ENCODE measurements at regions of chr1 and their contacts with region 1.

Region 1: DNA sequence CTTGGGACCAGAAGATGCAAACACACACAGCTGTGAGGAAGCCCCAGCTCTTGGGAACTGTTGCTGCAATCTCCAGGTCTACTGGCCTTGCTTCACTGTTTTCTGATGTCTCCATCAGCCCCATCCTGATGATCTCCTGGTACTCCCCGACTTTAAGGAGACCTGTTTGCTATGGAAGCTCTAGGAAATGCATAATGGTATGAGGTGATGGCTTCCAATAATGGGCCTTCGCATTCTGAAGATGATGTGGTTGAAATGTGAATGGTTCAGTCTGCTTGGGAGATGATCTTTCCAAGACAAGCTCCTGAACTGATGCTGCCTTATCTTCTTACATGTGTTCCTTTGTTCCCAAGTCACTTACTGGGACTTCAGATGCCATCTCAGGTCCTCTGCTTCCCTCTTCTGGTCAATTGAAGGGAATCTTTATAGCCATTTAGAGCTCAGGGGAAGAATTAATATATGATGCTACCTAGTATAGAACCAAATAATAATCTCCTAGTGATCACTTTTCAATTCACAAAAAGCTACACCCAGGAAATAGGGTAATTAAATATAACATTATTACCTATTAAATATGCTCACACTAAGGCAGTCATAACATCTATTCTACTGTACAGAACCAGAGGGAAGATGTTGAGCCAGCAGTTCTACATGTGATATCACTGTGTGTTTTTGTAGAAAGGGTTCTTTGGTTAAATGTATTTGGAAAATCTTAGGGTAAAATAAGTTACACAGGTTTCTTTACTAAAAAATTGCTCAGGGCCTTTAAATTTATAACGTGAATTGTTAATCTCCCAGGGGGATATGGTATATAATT is 73.9 kb upstream of the VTCN1 start:
- DNase-seq: no peak
- H3K4me3 ChIP-seq: no peak overlapping the region
- H3K27ac ChIP-seq: no peak overlapping the region
- H3K4me1 ChIP-seq: peaks cover 0 to 3% (median 0%) of the 10 kb centered on the region in 4 donors
- H3K27me3 ChIP-seq: peaks cover 8% of the 10 kb centered on the region
- CTCF ChIP-seq: peak; percentile 41 to 63 (median 49)
- EP300 ChIP-seq: no peak
- POLR2A ChIP-seq: no peak

Region 2: DNA sequence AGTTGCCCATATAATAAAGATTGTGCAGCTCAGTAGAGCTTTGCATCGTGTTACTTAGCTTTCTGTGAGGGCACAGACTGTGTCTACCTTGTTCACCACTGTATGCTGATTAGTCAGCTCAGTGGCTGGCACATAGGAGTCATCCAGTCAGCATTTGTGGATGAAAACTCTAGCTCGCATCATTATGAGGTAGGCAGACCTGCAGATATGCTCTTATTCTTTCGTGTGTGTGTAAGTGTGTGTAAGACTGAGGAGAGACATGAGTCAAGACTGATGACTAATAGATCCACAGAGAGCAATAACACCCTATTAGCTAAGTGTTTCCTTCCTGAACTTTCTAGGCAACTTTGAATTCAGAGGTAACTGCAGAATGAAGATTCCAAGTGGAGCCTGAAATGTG is 207.3 kb before region 1 on chr1:
- in situ Hi-C with region 1: loop called in 1 of 4 experiments (anchors 10 kb)
- intact Hi-C with region 1: no loop called
- DNase-seq: no peak
- H3K4me3 ChIP-seq: no peak overlapping the region
- H3K27ac ChIP-seq: no peak overlapping the region
- H3K4me1 ChIP-seq: no peaks in the 10 kb centered on the region
- H3K27me3 ChIP-seq: no peaks in the 10 kb centered on the region
- CTCF ChIP-seq: no peak
- EP300 ChIP-seq: no peak
- POLR2A ChIP-seq: no peak

Region 3: DNA sequence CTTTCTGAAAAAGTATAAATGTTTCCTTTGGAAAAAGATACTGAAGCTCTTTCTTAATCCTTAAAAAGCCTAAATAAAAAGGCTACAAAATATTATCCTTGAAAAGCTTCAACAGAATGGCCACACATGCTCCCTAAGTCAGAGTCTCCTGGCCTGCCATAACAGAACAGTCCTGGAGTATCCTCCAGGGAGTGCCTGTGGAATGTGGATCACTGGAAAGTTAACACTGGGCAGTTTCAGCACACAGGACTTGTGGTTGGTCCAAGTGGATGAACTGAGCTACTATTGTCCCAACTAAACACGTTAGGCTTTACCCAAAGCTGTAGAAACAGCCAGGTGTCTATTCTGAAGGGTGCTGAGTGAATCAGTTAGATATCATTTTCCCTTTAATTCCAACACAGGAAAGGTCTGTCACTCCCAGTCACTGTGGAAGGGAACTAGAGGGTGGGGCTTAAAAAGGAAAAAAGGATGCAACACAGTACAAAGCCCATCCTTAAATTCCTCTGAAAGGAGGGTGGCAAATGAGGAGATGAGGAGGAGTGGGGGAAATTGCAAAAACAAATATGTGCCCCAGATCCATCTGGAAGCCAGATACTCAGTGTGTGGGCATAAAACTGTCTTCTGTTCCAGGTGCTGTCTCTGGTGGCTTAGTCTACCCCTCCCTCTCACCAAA is 1096.7 kb after region 1 on chr1:
- in situ Hi-C with region 1: no loop called
- intact Hi-C with region 1: no loop called
- DNase-seq: no peak
- H3K4me3 ChIP-seq: no peak overlapping the region
- H3K27ac ChIP-seq: no peak overlapping the region
- H3K4me1 ChIP-seq: no peaks in the 10 kb centered on the region
- H3K27me3 ChIP-seq: no peaks in the 10 kb centered on the region
- CTCF ChIP-seq: no peak
- EP300 ChIP-seq: no peak
- POLR2A ChIP-seq: no peak

Measured in transverse colon (tissue), 4 donors.